WTC11 (cell line): ENCODE measurements at regions of chr6 and their contacts with region 1.

Region 1: DNA sequence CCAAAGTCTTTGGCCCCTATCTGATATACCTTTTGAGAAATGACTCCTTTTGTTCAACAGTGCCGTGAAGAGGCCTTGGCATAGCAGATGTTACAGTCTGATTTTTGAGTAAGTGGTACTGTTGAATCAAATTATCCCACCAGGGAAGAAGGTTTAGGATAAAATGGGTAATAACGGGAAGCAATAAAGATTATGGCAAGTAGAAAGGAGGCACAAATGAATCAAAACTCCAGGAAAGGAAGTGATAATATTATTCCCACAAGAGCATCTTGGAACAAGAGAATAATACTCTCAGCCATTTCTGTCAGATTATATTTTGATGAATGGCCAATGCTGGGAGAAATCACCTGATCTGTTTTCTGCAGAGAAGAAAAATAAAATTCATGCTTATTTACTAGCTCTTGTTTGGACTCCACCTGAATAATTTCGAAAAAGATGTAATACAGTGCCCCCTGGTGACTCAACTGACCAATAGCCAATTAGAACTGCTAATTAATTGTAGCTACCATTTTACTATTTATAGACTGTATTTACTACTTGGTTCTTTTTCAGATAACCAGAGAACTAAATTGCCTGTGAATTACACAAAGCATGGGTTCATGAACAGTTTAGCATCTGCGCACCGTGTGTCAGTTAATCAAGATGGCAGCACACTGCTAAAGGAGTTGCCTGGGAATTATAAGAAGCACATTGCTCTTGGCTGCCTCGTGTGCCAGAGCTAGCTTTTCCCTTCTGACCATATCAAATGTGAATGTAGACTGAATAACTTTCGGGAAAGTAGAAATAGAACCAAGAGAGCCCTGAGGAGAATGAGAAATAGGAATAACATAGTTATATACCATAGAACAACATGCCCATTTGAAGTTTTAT is 78.5 kb upstream of the TRDN start:
- DNase-seq: no peak
- ATAC-seq: peak; percentile 47
- H3K4me3 Mint-ChIP-seq: no peak overlapping the region
- H3K27ac Mint-ChIP-seq: no peak overlapping the region
- H3K4me1 Mint-ChIP-seq: peaks cover 3% of the 10 kb centered on the region
- H3K27me3 Mint-ChIP-seq: no peaks in the 10 kb centered on the region
- CTCF ChIP-seq: peak; percentile 20; the same call in 1 of the 2 replicates

Region 2: DNA sequence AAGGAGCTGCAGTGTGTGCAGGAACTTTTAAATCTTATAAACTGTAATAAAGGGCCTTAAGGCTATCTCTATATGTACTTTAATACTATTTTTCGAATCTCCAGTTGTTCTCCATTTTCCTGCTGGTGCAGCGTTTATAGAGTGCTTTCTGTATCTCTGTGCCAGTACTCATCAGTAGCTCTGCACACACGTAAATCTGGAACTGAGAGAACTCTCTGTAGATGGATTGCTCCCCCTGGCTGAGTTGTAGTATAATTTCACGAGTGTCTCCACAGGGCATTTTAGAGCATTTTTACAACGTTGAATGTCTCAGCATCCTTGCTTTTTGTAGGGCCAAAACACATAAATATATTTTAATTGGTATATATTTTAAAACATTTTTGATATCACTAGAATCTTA is 335.0 kb before region 1 on chr6:
- CTCF ChIA-PET with region 1: interaction called, 13 read pairs
- POLR2A ChIA-PET with region 1: no interaction called
- DNase-seq: no peak
- ATAC-seq: peak; percentile 91
- H3K4me3 Mint-ChIP-seq: no peak overlapping the region
- H3K27ac Mint-ChIP-seq: no peak overlapping the region
- H3K4me1 Mint-ChIP-seq: no peaks in the 10 kb centered on the region
- H3K27me3 Mint-ChIP-seq: no peaks in the 10 kb centered on the region
- CTCF ChIP-seq: no peak

Region 3: GRCh38 chr6:123415844-123416468 is 299.3 kb before region 1 on chr6:
- CTCF ChIA-PET with region 1: interaction called, 46 read pairs
- POLR2A ChIA-PET with region 1: no interaction called
- DNase-seq: peak; percentile 60
- ATAC-seq: peak; percentile 69
- H3K4me3 Mint-ChIP-seq: no peak overlapping the region
- H3K27ac Mint-ChIP-seq: no peak overlapping the region
- H3K4me1 Mint-ChIP-seq: peaks cover 25% of the 10 kb centered on the region
- H3K27me3 Mint-ChIP-seq: no peaks in the 10 kb centered on the region
- CTCF ChIP-seq: peak; percentile 81

Region 4: DNA sequence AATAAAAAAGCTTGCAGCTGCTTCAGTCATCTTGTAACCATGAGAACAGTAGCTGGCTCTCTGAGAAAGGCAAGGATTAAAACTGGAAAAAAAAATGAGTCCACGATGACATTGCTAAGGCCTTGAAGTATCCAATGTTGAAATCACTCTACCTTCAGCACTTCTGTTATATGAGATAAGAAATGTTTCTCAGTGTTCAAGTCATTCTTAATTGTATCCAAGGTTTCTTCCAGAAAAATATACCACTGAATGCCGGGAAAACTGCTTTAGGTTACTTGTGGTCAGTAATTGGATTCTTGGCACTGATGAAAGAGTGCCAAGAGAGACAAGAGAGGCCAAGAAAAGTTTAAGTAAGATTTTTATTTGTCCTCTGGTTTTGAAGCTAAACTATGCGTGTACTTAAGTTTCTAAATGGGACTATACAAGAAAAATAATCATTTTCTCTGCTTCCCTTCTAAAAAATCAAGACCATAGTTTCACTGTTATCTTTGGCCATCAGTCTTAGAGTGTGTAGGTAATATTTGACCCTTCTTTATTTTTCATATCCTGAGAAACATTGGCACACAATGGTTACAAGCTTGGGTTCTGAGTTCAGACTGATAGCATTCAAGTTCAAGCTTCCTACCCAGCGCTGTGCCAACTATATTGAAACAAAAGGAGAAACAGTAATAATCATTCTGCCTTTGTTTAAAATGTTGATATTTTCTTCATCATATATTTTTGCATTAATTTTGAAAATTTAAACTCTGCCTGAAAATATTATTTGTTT is 163.1 kb before region 1 on chr6:
- CTCF ChIA-PET with region 1: no interaction called
- POLR2A ChIA-PET with region 1: no interaction called
- DNase-seq: no peak
- ATAC-seq: no peak
- H3K4me3 Mint-ChIP-seq: no peak overlapping the region
- H3K27ac Mint-ChIP-seq: no peak overlapping the region
- H3K4me1 Mint-ChIP-seq: peaks cover 9% of the 10 kb centered on the region
- H3K27me3 Mint-ChIP-seq: no peaks in the 10 kb centered on the region
- CTCF ChIP-seq: no peak

Region 5: GRCh38 chr6:123562677-123563076 is 152.6 kb before region 1 on chr6:
- CTCF ChIA-PET with region 1: interaction called, 12 read pairs
- POLR2A ChIA-PET with region 1: no interaction called
- DNase-seq: no peak
- ATAC-seq: no peak
- H3K4me3 Mint-ChIP-seq: peak overlapping the region; percentile 20
- H3K27ac Mint-ChIP-seq: peak overlapping the region; percentile 88
- H3K4me1 Mint-ChIP-seq: peaks cover 89% of the 10 kb centered on the region
- H3K27me3 Mint-ChIP-seq: no peaks in the 10 kb centered on the region
- CTCF ChIP-seq: no peak